Right ventricle myocardium superior (tissue), 1 donor: ENCODE measurements at regions of chr9 and their contacts with region 1.

Region 1: GRCh38 chr9:88991066-88992034 is at the start of gene S1PR3:
- DNase-seq: peak; percentile 83
- ATAC-seq: peak; percentile 90
- total RNA-seq, gene S1PR3: 28.2 TPM

Region 2: GRCh38 chr9:88781628-88782391 is 209.5 kb before region 1 on chr9:
- intact Hi-C with region 1: loop called (anchors 5 kb)
- DNase-seq: peak; percentile 68
- ATAC-seq: peak; percentile 77

Region 3: DNA sequence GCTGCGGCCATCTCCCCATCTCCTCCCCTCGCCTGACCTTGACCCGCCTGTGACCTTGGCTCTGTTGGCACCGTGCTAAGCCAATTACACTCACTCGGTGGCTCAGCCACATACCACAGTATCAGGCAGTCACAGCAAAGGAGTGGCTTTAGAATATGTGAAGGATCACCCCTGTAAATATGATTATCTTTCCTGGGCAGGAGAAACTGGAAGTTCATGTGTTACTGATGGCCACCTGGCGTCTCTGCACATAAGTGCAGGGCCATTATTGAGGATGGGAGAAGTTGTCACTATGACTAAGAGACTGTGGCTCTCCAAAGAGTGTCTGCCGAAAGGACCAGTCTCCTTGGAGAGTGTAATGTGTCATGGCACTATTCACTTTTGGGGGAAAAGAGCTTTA is 117.0 kb before region 1 on chr9:
- intact Hi-C with region 1: loop called (anchors 10 kb)
- DNase-seq: no peak
- ATAC-seq: peak; percentile 49

Region 4: GRCh38 chr9:88949425-88949824 is 41.9 kb before region 1 on chr9:
- intact Hi-C with region 1: loop called (anchors 5 kb)
- DNase-seq: peak; percentile 61
- ATAC-seq: peak; percentile 91